ENCODE measurements at regions of chr12 and their contacts with region 1.

Region 1: GRCh38 chr12:111812881-111813741 is 28.9 kb upstream of the MAPKAPK5 start:
- DNase-seq: peak; percentile 89
- H3K4me3 Mint-ChIP-seq: no peak overlapping the region
- H3K27ac Mint-ChIP-seq: no peak overlapping the region
- H3K4me1 Mint-ChIP-seq: peaks cover 7% of the 10 kb centered on the region
- H3K27me3 Mint-ChIP-seq: peaks cover 14% of the 10 kb centered on the region

Region 2: GRCh38 chr12:111685744-111686517 is 127.2 kb before region 1 on chr12 and contains the starts of genes ACAD10 and BRAP:
- intact Hi-C with region 1: loop called (anchors 1 kb)
- DNase-seq: peak; percentile 99
- H3K4me3 Mint-ChIP-seq: peak within 1 kb of the TSS; percentile 99
- H3K27ac Mint-ChIP-seq: peak within 1 kb of the TSS; percentile 96
- H3K4me1 Mint-ChIP-seq: peaks cover 28% of the 10 kb centered on the region
- H3K27me3 Mint-ChIP-seq: no peaks in the 10 kb centered on the region
- total RNA-seq, gene ACAD10: 28.2 and 28.6 TPM in 2 replicates
- total RNA-seq, gene BRAP: 20.3 TPM in 2 replicates

Region 3: DNA sequence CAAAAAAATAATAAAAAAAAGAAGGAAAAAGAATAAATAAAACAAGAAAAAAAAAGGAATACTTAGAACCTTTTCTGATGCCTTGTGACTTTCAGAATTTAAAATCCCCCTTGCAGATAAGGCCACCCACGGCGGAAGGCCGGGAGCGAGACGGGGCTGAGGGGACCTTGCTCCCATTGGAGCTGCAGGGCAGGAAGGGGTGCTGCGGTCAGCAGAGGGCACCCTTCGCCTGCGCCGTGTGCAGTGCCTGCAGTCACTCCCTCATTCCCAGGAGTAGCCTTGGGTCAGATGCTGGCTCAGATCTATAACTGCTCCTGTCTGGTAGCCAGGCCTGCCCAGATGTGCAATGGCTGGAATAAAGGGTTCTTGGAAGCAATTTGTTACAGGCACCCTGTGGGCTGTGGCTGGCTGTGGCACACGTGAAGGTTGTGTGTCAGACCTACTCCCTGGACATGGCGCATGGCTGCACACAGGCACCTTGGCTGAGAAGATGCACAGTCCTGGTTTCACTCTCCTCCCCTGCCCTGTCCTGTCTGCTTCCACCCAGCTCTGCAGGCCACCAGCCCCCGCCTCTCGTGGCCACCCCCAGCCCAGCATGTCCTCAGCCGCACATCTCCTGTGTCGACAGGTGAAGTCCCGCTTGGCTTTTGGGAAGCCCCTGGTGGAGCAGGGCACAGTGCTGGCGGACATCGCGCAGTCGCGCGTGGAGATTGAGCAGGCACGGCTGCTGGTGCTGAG is 59.8 kb before region 1 on chr12:
- intact Hi-C with region 1: loop called (anchors 1 kb)
- DNase-seq: no peak
- H3K4me3 Mint-ChIP-seq: no peak overlapping the region
- H3K27ac Mint-ChIP-seq: no peak overlapping the region
- H3K4me1 Mint-ChIP-seq: peaks cover 6% of the 10 kb centered on the region
- H3K27me3 Mint-ChIP-seq: no peaks in the 10 kb centered on the region

Region 4: GRCh38 chr12:111766608-111767361 is 46.3 kb before region 1 on chr12 and contains the start of gene ALDH2:
- intact Hi-C with region 1: loop called (anchors 5 kb)
- DNase-seq: peak; percentile 77
- H3K4me3 Mint-ChIP-seq: peak within 1 kb of the TSS; percentile 82
- H3K27ac Mint-ChIP-seq: no peak within 1 kb of the TSS
- H3K4me1 Mint-ChIP-seq: peaks cover 8% of the 10 kb centered on the region
- H3K27me3 Mint-ChIP-seq: peaks cover 39% of the 10 kb centered on the region
- total RNA-seq, gene ALDH2: 0.09 and 0.21 TPM in 2 replicates

Measured in activated CD4-positive, alpha-beta T cell treated with anti-CD3 and anti-CD28 coated beads, Interleukin-2, amount 10 ng/mL, durations not matched to agents 24 days and 14 days (primary cell).